Lower leg skin (tissue), 4 donors: ENCODE measurements at regions of chr12 and their contacts with region 1.

Region 1: DNA sequence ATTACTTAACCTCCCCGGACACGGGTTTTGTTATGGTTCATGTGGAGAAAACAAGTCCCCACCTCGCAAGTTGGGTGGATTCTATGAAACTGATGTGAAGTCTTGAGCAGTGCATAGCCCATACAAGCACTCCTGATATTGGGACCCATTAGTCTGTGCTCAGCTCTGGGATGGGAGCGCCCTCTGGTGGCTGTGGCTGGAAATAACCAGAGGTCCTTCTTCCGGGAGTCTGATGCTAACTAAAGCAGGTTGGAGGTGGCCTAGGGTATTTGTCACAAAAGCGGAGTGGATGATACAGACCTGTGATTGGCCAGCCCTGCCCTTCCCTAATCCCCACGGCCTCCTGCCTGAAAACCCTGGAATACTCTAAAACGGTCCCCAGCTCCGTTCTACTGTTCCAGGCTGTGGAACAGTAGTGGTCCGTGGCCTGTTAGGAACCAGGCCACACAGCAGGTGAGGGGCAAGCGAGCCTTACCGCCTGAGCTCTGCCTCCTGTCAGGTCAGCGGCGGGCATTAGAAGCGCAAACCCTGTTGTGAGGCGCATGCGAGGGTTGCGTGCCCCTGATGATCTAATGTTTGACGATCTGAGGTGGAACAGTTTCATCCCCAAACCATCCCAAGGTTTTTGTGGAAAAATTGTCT is 6.4 kb downstream of the SLC48A1 start:
- DNase-seq: peak; percentile 90 to 98
- H3K4me3 ChIP-seq: no peak overlapping the region
- CTCF ChIP-seq: peak in 1 of 3 donors; percentile 87
- POLR2A ChIP-seq: no peak

Region 2: GRCh38 chr12:47715393-47715876 is 64.0 kb before region 1 on chr12:
- intact Hi-C with region 1: loop called (anchors 5 kb)
- DNase-seq: peak; percentile 78 to 96
- H3K4me3 ChIP-seq: no peak overlapping the region
- CTCF ChIP-seq: peak in 1 of 3 donors; percentile 70
- POLR2A ChIP-seq: no peak